Activated CD4-positive, alpha-beta T cell treated with anti-CD3 and anti-CD28 coated beads for 36 hours (primary cell): ENCODE measurements at regions of chr11 and their contacts with region 1.

Region 1: DNA sequence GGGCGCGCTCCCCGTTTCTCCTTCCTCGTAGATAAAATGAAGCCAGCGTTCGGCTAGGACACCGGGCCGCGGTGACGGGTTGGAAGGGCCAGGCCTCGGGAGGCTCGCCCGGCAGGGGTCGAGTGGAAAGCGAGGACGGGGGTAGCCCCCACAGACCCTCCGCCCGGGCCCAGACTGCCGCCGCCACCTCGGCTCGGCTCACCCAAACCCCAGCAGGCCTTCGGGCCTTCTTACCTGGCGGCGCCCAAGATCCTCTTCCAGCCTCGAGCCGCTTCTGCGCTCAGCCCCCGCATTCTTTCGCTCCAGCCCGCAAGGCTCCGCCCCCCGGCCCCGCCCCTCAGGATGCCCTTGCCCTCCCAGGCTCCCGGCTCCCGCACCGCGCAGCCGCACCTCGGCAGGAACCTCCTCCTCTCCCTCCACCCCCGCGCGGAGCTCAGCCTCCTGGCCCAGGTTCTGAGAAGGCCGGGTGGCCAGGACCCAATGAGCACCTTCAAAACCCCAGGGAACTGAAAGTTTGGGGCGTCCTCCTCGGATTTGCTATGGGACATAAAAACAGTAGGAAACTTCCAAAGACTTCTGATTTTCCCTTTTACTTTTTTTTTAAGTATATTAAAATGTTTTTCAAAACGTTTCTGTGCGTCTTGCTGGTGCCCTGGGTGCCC is at the start of gene CD59:
- DNase-seq: peak; percentile 95
- ATAC-seq: peak; percentile 74
- H3K4me3 Mint-ChIP-seq: peak within 1 kb of the TSS; percentile 82
- H3K27ac Mint-ChIP-seq: peak within 1 kb of the TSS; percentile 84
- H3K4me1 Mint-ChIP-seq: peaks cover 44% of the 10 kb centered on the region
- H3K27me3 Mint-ChIP-seq: peaks cover 16% of the 10 kb centered on the region
- total RNA-seq, gene CD59: 58.2 to 60.0 TPM

Region 2: GRCh38 chr11:33317662-33318061 is 418.6 kb before region 1 on chr11:
- CTCF ChIA-PET with region 1: no interaction called
- POLR2A ChIA-PET with region 1: no interaction called
- intact Hi-C with region 1: no loop called
- DNase-seq: no peak
- ATAC-seq: peak; percentile 77
- H3K4me3 Mint-ChIP-seq: no peak overlapping the region
- H3K27ac Mint-ChIP-seq: peak overlapping the region; percentile 44
- H3K4me1 Mint-ChIP-seq: peaks cover 21% of the 10 kb centered on the region
- H3K27me3 Mint-ChIP-seq: no peaks in the 10 kb centered on the region

Region 3: GRCh38 chr11:33700425-33701271 is 35.6 kb before region 1 on chr11 and contains the start of gene C11orf91:
- CTCF ChIA-PET with region 1: interaction called, 5 read pairs
- POLR2A ChIA-PET with region 1: no interaction called
- intact Hi-C with region 1: loop called (anchors 1 kb)
- DNase-seq: peak; percentile 94
- ATAC-seq: peak; percentile 93
- H3K4me3 Mint-ChIP-seq: peak within 1 kb of the TSS; percentile 74
- H3K27ac Mint-ChIP-seq: peak within 1 kb of the TSS; percentile 45
- H3K4me1 Mint-ChIP-seq: peaks cover 18% of the 10 kb centered on the region
- H3K27me3 Mint-ChIP-seq: peaks cover 16% of the 10 kb centered on the region
- total RNA-seq, gene C11orf91: not detected

Region 4: DNA sequence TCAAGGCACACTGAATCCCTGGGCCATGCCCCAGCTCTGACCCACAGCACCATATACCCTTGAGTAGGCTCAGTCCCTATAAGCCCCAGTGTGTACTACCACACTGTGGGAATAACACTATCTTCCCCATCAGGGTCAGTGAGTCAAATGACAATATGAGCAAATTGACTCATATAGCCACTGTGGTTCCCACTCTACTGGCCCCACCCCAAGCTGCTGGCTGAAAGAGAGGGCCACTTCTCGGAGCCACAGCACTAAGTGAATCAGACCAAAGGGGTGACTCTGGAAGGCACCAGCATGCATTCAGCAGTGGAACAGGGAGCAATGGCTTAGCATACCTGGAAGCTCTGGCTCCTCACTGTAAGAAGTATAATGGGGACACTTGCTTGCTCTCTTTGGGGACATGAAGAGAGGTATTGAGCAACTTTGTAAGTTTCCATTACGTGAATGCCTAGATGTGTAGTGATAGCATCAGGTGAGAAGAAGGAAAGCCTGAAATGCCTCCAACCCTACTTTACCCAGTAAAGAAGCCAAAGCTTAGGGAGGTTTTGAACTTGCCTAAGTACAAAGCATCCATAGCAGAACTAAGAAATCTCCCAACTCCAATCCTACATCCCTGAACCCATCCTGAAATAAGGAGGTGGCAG is 13.6 kb before region 1 on chr11:
- CTCF ChIA-PET with region 1: interaction called, 4 read pairs
- POLR2A ChIA-PET with region 1: interaction called, 5 read pairs
- intact Hi-C with region 1: loop called (anchors 1 kb)
- DNase-seq: peak; percentile 76
- ATAC-seq: peak; percentile 91
- H3K4me3 Mint-ChIP-seq: no peak overlapping the region
- H3K27ac Mint-ChIP-seq: peak overlapping the region; percentile 74
- H3K4me1 Mint-ChIP-seq: peaks cover 46% of the 10 kb centered on the region
- H3K27me3 Mint-ChIP-seq: peaks cover 3% of the 10 kb centered on the region

Region 5: GRCh38 chr11:33773987-33774735 is 37.9 kb after region 1 on chr11 and contains the start of gene FBXO3:
- CTCF ChIA-PET with region 1: interaction called, 6 read pairs
- POLR2A ChIA-PET with region 1: no interaction called
- intact Hi-C with region 1: loop called (anchors 1 to 5 kb)
- DNase-seq: peak; percentile 87
- ATAC-seq: peak; percentile 85
- H3K4me3 Mint-ChIP-seq: peak within 1 kb of the TSS; percentile 89
- H3K27ac Mint-ChIP-seq: peak within 1 kb of the TSS; percentile 75
- H3K4me1 Mint-ChIP-seq: peaks cover 44% of the 10 kb centered on the region
- H3K27me3 Mint-ChIP-seq: peaks cover 12% of the 10 kb centered on the region
- total RNA-seq, gene FBXO3: 11.4 to 12.2 TPM

Region 6: DNA sequence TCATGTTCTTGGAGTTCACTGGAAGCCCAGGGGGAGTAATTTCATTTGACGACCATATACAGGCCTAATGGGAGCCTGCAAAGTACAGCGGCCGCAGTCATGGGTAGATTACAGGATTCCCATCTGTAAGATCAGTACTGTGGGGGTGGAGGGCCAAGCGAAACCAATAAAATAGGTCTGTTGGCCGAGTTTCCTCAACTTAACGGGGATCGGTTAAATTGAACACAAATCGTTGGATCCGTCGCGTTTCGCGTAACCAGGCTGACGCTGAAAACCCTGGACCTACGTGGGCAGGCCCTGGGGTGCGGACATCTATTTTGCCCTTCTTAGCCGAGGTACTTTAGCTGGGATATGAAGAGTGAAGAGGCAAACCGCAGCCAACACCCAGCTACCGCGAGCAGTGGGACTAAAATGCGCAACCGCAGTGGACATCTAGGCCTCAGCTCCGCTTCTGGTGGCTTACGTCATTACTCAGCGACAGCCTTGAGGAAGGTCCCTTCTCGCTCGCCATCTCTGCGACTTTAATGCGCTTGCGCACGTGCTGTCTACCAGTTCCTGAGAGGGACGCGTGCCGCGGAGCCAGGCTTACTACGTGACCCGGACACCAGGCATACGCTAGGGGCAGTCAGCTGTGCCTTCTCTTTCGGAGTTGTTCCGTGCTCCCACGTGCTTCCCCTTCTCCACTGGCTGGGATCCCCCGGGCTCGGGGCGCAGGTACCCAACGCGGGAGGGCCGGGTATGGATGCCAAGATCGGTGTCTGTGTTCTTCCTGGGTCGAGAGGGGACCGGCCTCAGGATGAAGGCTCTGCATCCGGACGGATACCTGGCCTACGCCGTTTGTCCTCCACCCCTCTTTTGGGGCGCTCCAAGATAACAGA is 369.0 kb after region 1 on chr11 and contains the start of gene NAT10:
- CTCF ChIA-PET with region 1: no interaction called
- POLR2A ChIA-PET with region 1: no interaction called
- intact Hi-C with region 1: loop called in 1 of 2 experiments (anchors 1 kb)
- DNase-seq: peak; percentile 98
- ATAC-seq: peak; percentile 93
- H3K4me3 Mint-ChIP-seq: peak within 1 kb of the TSS; percentile 97
- H3K27ac Mint-ChIP-seq: peak within 1 kb of the TSS; percentile 99
- H3K4me1 Mint-ChIP-seq: peaks cover 57% of the 10 kb centered on the region
- H3K27me3 Mint-ChIP-seq: no peaks in the 10 kb centered on the region
- total RNA-seq, gene NAT10: 142 to 147 TPM

Region 7: GRCh38 chr11:35662649-35663407 is 1926.5 kb after region 1 on chr11 and contains the start of gene TRIM44:
- CTCF ChIA-PET with region 1: no interaction called
- POLR2A ChIA-PET with region 1: no interaction called
- intact Hi-C with region 1: loop called in 1 of 2 experiments (anchors 10 kb)
- DNase-seq: peak; percentile 92
- ATAC-seq: peak; percentile 86
- H3K4me3 Mint-ChIP-seq: peak within 1 kb of the TSS; percentile 83
- H3K27ac Mint-ChIP-seq: peak within 1 kb of the TSS; percentile 97
- H3K4me1 Mint-ChIP-seq: peaks cover 41% of the 10 kb centered on the region
- H3K27me3 Mint-ChIP-seq: peaks cover under 1% of the 10 kb centered on the region
- total RNA-seq, gene TRIM44: 38.1 to 39.9 TPM